ENCODE measurements at regions of chrX and their contacts with region 1.

Region 1: DNA sequence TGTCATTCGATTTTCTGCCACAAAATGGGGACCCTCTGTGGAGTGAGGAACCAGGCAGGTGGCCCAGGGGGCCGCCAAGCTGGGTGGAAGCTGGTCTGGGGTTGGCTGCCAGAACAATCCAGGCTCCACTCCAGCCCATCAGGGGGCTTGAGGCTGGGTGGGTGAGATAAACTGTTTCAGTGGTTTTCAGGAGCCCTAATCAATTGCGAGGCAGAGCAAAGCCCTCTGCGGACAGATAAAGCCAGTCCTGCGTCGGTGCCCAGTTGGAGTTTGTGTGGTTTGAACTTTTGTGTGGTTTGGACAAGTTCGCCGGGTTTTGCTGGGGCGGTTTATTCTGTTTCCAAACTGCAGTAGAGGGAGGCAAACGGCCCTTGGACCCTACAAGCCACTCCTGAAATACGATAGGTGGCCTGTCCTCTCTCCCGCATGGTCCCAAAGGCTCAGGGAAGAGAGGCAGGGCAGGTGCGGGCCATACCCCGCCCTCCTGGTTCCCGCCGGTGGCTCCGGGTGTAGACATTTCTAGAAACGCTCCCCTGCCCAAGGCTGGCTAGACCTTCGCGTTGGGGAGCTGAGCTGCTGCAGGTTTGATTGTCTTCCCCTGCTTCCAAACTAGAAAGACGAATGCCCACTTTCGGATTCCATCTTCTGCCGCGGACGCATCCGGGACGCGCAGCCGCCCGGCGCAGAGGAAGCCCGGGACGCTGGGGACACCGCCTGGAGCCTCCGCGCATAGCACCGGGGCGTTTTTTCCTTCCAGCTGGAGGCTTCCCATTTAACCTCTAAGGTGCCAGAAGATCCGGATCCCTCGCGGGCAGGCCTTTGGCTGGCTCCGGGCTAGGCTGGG is 169.0 kb upstream of the BCOR start:
- DNase-seq: peak in 1 of 2 experiments; percentile 45
- H3K4me3 ChIP-seq: peak overlapping the region; percentile 49; the same call in 1 of the 2 replicates
- H3K27ac ChIP-seq: no peak overlapping the region
- H3K4me1 ChIP-seq: no peaks in the 10 kb centered on the region
- H3K27me3 ChIP-seq: no peaks in the 10 kb centered on the region
- CTCF ChIP-seq: peak; percentile 49

Region 2: GRCh38 chrX:40085102-40085551 is 181.6 kb before region 1 on chrX:
- CTCF ChIA-PET with region 1: no interaction called
- POLR2A ChIA-PET with region 1: no interaction called
- intact Hi-C with region 1: loop called (anchors 5 kb)
- DNase-seq: peak; percentile 21 to 80
- H3K4me3 ChIP-seq: no peak overlapping the region
- H3K27ac ChIP-seq: peak overlapping the region; percentile 68
- H3K4me1 ChIP-seq: peaks cover 10% of the 10 kb centered on the region
- H3K27me3 ChIP-seq: no peaks in the 10 kb centered on the region
- CTCF ChIP-seq: no peak

Region 3: GRCh38 chrX:40182615-40183014 is 84.1 kb before region 1 on chrX:
- CTCF ChIA-PET with region 1: no interaction called
- POLR2A ChIA-PET with region 1: no interaction called
- intact Hi-C with region 1: no loop called
- DNase-seq: no peak
- H3K4me3 ChIP-seq: no peak overlapping the region
- H3K27ac ChIP-seq: no peak overlapping the region
- H3K4me1 ChIP-seq: no peaks in the 10 kb centered on the region
- H3K27me3 ChIP-seq: no peaks in the 10 kb centered on the region
- CTCF ChIP-seq: no peak

Region 4: GRCh38 chrX:40685362-40685918 is 418.7 kb after region 1 on chrX:
- CTCF ChIA-PET with region 1: no interaction called
- POLR2A ChIA-PET with region 1: no interaction called
- intact Hi-C with region 1: no loop called
- DNase-seq: no peak
- H3K4me3 ChIP-seq: no peak overlapping the region
- H3K27ac ChIP-seq: no peak overlapping the region
- H3K4me1 ChIP-seq: no peaks in the 10 kb centered on the region
- H3K27me3 ChIP-seq: no peaks in the 10 kb centered on the region
- CTCF ChIP-seq: no peak